Naive thymus-derived CD4-positive, alpha-beta T cell (primary cell): ENCODE measurements at regions of chr7 and their contacts with region 1.

Region 1: GRCh38 chr7:74474271-74474865 is 20.7 kb downstream of the GTF2IRD1 start:
- DNase-seq: no peak
- ATAC-seq: no peak
- H3K4me3 ChIP-seq: no peak overlapping the region
- H3K4me3 Mint-ChIP-seq: no peak overlapping the region
- H3K27ac ChIP-seq: no peak overlapping the region
- H3K27ac Mint-ChIP-seq: no peak overlapping the region
- H3K4me1 ChIP-seq: no peaks in the 10 kb centered on the region
- H3K4me1 Mint-ChIP-seq: peaks cover 0 to 6% (median 0%) of the 10 kb centered on the region in 7 donors
- H3K27me3 ChIP-seq: no peaks in the 10 kb centered on the region
- H3K27me3 Mint-ChIP-seq: peaks cover 0 to 7% (median 0%) of the 10 kb centered on the region in 5 donors

Region 2: DNA sequence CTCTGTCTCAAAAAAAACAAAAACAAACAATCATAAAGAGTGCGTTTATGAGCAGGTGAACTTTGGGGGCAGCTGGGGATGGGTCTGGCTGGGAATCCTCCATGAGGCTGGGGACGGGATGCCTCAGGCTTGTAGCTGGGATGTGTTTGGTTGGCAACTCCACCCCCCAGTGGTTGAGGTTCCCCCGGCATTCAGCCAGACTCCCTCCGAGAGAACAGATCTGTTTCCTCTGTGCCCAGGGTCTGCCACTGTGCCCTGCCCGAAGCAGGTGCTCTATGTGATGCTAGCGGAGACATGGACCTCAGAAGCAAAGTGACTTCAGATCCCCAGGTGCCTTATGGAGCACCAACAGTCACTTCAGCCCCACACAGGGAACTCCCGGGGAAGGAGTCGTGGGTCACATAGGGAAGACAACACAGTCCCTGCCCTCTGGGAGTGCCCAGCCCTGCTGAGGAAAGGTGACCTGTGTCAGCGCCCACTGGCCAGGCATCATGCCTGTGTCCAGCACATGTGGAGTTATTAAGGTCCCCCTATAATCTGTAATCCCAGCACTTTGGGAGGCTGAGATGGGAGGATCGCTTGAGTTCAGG is 50.0 kb before region 1 on chr7:
- CTCF ChIA-PET with region 1: no interaction called
- POLR2A ChIA-PET with region 1: no interaction called
- intact Hi-C with region 1: loop called in 1 of 2 experiments (anchors 5 kb)
- DNase-seq: no peak
- ATAC-seq: no peak
- H3K4me3 ChIP-seq: no peak overlapping the region
- H3K4me3 Mint-ChIP-seq: no peak overlapping the region
- H3K27ac ChIP-seq: no peak overlapping the region
- H3K27ac Mint-ChIP-seq: no peak overlapping the region
- H3K4me1 ChIP-seq: no peaks in the 10 kb centered on the region
- H3K4me1 Mint-ChIP-seq: no peaks in the 10 kb centered on the region
- H3K27me3 ChIP-seq: no peaks in the 10 kb centered on the region
- H3K27me3 Mint-ChIP-seq: no peaks in the 10 kb centered on the region